Endothelial cell of umbilical vein (primary cell): ENCODE measurements at regions of chrX and their contacts with region 1.

Region 1: DNA sequence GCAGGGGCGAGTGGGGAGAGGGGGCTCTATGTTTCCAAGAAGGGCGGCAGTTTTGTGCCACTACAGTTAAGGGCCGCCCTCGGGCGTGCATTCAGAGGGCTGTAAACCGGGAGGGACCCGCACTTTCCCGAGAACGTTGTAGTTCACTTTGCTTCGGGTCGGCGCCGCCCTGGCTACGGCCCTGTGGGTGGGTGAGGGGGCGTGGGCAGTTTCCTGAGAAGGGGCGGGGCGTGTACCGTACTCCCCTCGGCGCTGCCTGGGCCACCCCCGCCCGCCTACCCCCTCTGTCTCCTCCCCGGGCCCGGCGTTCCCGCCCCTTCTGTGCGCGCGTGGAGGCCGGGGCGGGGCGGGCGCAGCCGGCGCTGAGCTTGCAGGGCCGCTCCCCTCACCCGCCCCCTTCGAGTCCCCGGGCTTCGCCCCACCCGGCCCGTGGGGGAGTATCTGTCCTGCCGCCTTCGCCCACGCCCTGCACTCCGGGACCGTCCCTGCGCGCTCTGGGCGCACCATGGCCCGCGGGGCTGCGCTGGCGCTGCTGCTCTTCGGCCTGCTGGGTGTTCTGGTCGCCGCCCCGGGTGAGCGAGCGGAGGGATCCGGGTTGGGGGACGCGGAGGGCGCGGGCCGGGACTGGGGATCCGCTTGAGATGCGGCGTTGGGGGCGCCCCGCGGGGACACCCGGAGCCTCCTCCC is at the start of gene CD99:
- DNase-seq: peak; percentile 91
- H3K4me3 ChIP-seq: peak within 1 kb of the TSS; percentile 76 to 100 (median 92)
- H3K27ac ChIP-seq: peak within 1 kb of the TSS; percentile 76
- H3K4me1 ChIP-seq: peaks cover 38% of the 10 kb centered on the region
- H3K27me3 ChIP-seq: no peaks in the 10 kb centered on the region
- CTCF ChIP-seq: no peak
- POLR2A ChIP-seq: peak; percentile 72
- total RNA-seq, gene CD99: 641 and 654 TPM in 2 replicates

Region 2: GRCh38 chrX:2474280-2474962 is 216.6 kb before region 1 on chrX:
- CTCF ChIA-PET with region 1: no interaction called
- POLR2A ChIA-PET with region 1: no interaction called
- dilution Hi-C with region 1: no loop called
- intact Hi-C with region 1: no loop called
- DNase-seq: no peak
- H3K4me3 ChIP-seq: no peak overlapping the region
- H3K27ac ChIP-seq: no peak overlapping the region
- H3K4me1 ChIP-seq: no peaks in the 10 kb centered on the region
- H3K27me3 ChIP-seq: no peaks in the 10 kb centered on the region
- CTCF ChIP-seq: no peak
- POLR2A ChIP-seq: no peak

Region 3: DNA sequence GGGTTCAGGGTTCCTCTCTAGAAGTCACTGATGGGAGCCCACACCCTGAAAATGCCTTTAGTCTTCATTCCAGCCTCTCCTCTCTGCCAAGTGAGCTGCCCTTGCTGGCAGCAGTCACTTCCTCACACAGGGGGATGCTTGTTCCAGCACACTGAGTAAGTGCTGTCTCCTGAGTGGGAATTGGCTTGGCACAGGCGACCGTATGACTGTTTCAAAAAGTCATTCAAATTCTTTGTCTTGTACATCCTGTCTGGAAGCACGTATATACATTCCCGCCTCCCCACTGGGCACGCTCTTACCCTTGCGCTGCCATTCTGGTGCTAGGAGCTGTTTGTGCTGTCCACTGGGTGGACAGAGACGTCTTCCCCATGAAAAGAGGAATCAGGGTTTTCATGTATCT is 40.1 kb before region 1 on chrX:
- CTCF ChIA-PET with region 1: no interaction called
- POLR2A ChIA-PET with region 1: no interaction called
- dilution Hi-C with region 1: no loop called
- intact Hi-C with region 1: loop called (anchors 1 kb)
- DNase-seq: peak; percentile 86
- H3K4me3 ChIP-seq: no peak overlapping the region
- H3K27ac ChIP-seq: peak overlapping the region; percentile 63
- H3K4me1 ChIP-seq: peaks cover 10% of the 10 kb centered on the region
- H3K27me3 ChIP-seq: no peaks in the 10 kb centered on the region
- CTCF ChIP-seq: no peak
- POLR2A ChIP-seq: no peak

Region 4: GRCh38 chrX:2677764-2678163 is 13.2 kb before region 1 on chrX:
- CTCF ChIA-PET with region 1: no interaction called
- POLR2A ChIA-PET with region 1: no interaction called
- dilution Hi-C with region 1: no loop called
- intact Hi-C with region 1: loop called (anchors 2 kb)
- DNase-seq: peak; percentile 79
- H3K4me3 ChIP-seq: no peak overlapping the region
- H3K27ac ChIP-seq: no peak overlapping the region
- H3K4me1 ChIP-seq: peaks cover 10% of the 10 kb centered on the region
- H3K27me3 ChIP-seq: no peaks in the 10 kb centered on the region
- CTCF ChIP-seq: no peak
- POLR2A ChIP-seq: no peak

Region 5: GRCh38 chrX:2903366-2903765 is 212.4 kb after region 1 on chrX:
- CTCF ChIA-PET with region 1: no interaction called
- POLR2A ChIA-PET with region 1: no interaction called
- dilution Hi-C with region 1: no loop called
- intact Hi-C with region 1: no loop called
- DNase-seq: no peak
- H3K4me3 ChIP-seq: no peak overlapping the region
- H3K27ac ChIP-seq: no peak overlapping the region
- H3K4me1 ChIP-seq: no peaks in the 10 kb centered on the region
- H3K27me3 ChIP-seq: no peaks in the 10 kb centered on the region
- CTCF ChIP-seq: no peak
- POLR2A ChIP-seq: no peak

Region 6: DNA sequence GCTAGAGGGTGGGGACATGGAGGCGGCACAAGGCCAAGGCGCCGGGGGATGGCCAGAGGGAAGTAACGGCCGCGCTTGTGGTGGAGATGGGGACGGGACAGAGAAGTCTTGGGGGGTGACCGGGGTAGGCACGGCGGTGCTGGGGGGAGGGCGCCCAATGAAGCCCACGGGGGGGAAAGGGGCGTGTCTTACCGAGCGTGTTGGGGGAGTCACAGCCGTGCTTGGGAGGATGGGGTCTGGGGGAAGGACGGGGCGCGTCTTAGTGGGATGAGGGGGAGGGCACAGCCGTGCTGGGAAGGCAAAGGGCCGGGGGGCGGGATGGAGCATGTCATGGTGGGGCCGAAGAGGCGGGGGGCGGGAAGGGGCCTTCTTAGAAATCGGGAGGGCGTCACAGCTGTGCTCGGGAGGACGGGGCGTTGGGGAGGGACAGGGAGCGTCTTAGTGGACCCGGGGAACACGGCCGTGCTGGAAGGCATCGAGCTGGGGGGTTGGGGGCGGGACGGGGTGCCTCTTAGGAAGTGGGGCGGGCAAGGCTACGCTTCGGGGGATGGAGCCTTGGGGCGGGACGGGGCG is 237.3 kb after region 1 on chrX:
- CTCF ChIA-PET with region 1: no interaction called
- POLR2A ChIA-PET with region 1: no interaction called
- dilution Hi-C with region 1: no loop called
- intact Hi-C with region 1: loop called (anchors 5 kb)
- DNase-seq: peak; percentile 62
- H3K4me3 ChIP-seq: peak overlapping the region; percentile 24 to 51 (median 40)
- H3K27ac ChIP-seq: peak overlapping the region; percentile 77
- H3K4me1 ChIP-seq: no peaks in the 10 kb centered on the region
- H3K27me3 ChIP-seq: no peaks in the 10 kb centered on the region
- CTCF ChIP-seq: no peak
- POLR2A ChIP-seq: no peak

Region 7: DNA sequence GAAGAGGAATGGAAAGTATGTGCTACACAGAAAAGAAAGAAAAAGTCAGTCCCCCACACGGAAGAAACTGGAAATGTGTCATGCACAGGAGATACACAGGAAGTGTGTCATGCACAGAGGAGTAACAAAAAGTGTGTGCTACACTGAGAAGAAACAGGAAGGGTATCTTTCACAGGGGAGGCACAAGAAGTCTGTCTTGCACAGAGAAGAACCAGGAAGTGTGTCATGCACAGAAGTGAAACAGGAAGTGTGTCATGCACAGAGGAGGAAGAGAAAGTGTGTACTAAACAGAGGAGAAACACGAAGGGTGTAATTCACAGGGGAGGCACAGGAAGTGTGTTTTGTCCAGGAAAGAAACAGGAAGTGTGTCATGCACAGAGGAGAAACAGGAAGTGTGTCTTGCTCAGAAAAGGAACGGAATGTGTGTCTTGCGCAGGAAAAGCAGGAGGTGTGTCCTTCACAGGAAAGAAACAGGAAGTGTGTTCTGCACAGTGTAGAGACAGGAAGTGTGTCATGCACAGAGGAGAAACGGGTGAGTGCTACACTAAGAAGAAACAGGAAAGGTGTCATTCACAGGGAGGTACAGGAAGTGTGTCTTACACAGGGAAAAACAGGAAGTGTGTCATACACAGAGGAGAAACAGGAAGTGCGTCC is 1549.7 kb after region 1 on chrX:
- CTCF ChIA-PET with region 1: no interaction called
- POLR2A ChIA-PET with region 1: no interaction called
- dilution Hi-C with region 1: no loop called
- intact Hi-C with region 1: no loop called
- DNase-seq: no peak
- H3K4me3 ChIP-seq: no peak overlapping the region
- H3K27ac ChIP-seq: no peak overlapping the region
- H3K4me1 ChIP-seq: no peaks in the 10 kb centered on the region
- H3K27me3 ChIP-seq: no peaks in the 10 kb centered on the region
- CTCF ChIP-seq: no peak
- POLR2A ChIP-seq: no peak